ENCODE measurements at regions of chr5 and their contacts with region 1.

Region 1: DNA sequence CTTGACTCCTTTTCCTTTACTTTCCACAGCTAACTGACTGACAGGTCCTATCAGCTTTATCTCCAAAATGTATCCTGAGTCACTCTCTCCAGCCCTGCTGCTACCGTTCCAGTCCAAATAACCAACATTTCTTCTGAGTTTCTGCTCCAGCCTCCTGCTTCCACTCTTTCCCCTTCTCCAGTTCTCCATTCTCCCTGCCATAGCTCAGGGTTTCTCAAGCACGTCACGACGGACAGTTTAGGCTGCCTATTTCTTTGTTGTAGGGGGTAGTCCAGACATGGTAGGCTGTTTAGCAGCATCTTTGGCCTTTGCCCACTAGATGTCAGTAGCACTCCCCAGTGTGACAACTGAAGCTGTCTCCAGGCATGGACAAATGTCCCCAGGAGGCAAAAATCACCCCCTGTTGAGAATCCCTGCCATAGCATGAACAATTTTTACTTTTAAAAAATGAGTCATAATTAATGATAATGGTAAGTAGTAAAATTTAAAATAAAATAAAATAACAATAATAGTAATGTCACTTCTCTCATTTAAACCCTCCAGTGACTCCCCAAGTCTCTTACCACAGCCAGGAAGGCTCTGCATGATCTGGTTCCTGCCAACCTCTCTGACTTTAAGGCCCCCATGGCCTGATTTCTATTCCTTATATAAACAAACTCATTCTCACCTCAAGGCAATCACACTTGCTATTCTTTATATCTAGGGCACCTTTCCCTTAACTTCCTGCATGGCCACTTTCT is 105.4 kb upstream of the FER start:
- DNase-seq: peak; percentile 50
- CTCF ChIP-seq: peak; percentile 86

Region 2: DNA sequence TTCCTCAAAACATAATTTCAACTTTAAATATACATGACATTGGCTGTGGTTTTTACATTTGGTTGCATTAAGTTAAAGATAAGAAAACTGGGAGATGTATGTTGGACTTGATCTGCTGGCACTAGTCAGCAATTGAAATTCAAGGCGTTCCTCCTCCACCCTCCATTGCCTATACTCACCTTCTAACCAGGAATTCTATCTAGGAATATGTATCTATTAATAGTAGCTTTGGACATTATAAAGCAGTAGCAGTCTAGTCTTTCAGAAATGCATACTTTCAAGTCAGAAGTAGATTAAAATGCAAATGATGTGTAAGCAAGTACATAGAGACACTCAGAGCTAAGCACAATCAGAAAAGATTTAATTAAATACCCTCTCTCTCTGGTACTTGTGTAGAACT is 130.3 kb after region 1 on chr5:
- in situ Hi-C with region 1: no loop called
- DNase-seq: no peak
- CTCF ChIP-seq: no peak

Region 3: GRCh38 chr5:109688971-109689739 is 1046.8 kb after region 1 on chr5:
- in situ Hi-C with region 1: loop called (anchors 25 kb)
- DNase-seq: peak; percentile 92
- CTCF ChIP-seq: no peak